ENCODE measurements at regions of chr1 and their contacts with region 1.

Region 1: DNA sequence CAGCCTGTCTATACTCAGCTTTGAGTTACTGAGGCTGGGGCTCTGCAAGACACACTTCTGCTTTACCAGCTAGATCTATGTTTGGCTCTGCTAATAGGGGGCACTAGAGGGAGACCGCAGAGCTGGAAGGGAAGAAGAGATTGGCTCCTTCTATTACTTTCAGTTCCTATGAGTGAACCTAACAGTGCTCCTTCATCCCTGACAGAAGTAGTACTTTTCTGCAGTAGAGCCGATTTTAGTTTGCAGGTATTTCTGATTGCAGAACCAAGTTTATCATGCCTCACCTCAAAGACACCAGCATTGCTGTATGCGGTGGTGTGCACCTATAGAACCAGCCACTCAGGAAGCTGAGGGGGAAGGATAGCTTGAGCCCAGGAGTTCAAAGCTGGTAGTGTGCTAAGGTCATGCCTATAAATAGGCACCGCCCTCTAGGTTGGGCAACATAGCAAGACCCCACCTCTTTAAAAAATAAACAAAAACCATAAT is 5.7 kb upstream of the ZDHHC18 start:
- DNase-seq: no peak

Region 2: GRCh38 chr1:26864610-26865527 is 44.0 kb after region 1 on chr1:
- intact Hi-C with region 1: loop called (anchors 5 kb)
- DNase-seq: peak; percentile 98

Measured in cardiac septum (tissue), 1 donor.